ENCODE measurements at regions of chr16 and their contacts with region 1.

Region 1: GRCh38 chr16:21656795-21657768 is 4.7 kb upstream of the IGSF6 start:
- DNase-seq: peak; percentile 57
- CTCF ChIP-seq: peak; percentile 74

Region 2: DNA sequence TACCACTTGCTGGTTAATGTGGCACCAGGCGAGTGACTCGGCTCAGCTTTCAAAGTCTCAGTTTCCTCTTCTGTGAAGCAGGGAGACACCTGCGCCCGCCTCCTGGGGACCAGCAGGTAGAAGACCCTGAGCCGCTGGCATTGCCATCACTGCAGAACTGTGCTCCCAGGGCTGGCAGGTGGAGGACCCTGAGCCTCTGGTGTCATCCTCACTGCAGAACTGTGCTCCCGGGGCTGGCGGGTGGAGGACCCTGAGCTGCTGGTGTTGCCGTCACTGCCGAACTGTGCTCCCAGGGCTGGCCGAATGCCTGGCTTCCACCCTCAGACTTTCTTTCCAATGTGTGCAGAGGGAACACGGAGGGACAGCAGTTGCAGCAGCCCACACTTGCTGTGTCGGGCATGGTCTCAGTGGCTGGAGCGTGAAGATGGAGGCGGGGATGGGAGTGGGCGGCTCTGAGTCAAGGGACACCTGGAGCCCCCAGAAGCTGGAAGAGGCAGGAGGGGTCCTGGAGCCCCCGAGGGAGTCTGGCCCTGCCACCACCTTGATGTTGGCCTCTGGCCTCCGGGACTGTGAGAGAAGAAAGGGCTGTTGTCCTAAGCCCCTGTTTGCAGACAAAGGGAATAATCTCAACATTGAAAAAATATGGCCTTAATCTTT is 133.5 kb before region 1 on chr16:
- CTCF ChIA-PET with region 1: no interaction called
- POLR2A ChIA-PET with region 1: no interaction called
- DNase-seq: no peak
- CTCF ChIP-seq: no peak

Region 3: DNA sequence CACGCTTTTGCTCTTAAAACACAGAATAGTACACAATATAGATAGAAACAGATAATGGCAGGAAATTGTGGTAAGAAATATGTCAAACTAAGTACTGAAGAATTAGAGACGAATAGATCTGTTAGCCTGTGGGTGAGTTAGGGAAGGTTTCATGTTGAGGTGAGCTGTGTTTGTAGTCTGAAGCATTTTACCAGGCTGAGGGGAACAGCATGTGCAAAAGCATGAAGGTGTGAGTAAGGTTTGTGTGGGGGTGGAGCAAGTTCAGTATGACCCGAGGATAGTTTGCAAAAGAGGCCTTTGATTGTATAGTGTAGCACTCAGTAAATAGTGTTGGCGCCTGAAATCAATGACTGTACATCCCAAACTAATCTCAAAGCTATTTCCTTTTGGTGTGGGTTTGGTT is 18.5 kb before region 1 on chr16:
- CTCF ChIA-PET with region 1: interaction called, 69 read pairs
- POLR2A ChIA-PET with region 1: no interaction called
- DNase-seq: no peak
- CTCF ChIP-seq: no peak

Region 4: DNA sequence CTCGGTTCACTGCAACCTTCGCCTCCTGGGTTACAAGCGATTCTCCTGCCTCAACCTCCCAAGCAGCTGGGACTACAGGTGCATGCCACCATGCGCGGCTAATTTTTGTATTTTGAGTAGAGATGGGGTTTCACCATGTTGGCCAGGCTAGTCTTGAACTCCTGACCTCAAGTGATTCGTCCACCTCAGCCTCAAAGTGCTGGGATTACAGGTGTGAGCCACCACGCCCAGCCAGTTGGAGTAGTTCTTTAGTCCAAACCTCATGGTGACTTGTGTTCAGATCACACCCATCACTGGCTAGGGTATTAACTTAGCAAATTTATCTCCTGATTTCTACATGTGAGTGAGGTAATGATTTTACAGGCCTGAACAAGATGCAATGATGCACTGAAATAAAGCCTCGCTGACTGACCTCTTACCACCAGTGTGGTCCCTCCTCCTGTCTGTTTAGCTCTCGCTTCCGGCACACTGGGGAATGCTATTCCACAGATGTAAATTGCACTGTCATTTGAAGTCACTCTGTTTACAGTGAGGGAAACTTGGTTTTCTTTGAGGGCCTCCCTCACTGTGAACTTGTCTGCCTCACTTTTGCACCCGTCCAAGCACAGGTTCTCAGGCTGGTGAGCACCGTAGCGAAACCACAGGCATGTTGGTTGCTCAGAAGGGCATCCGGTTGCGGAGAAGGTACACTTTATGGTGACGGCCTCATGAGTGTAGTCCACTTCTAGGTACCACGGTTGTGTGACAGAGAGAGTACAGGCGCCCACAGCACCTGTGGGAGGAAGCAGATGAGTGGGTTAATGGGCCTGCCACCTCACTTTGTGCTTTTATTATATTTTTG is 10.1 kb before region 1 on chr16:
- CTCF ChIA-PET with region 1: interaction called, 69 read pairs
- POLR2A ChIA-PET with region 1: no interaction called
- DNase-seq: peak; percentile 71
- CTCF ChIP-seq: no peak

Region 5: GRCh38 chr16:21698169-21699032 is 41.3 kb after region 1 on chr16:
- CTCF ChIA-PET with region 1: interaction called, 12 read pairs
- POLR2A ChIA-PET with region 1: no interaction called
- DNase-seq: no peak
- CTCF ChIP-seq: no peak

Region 6: DNA sequence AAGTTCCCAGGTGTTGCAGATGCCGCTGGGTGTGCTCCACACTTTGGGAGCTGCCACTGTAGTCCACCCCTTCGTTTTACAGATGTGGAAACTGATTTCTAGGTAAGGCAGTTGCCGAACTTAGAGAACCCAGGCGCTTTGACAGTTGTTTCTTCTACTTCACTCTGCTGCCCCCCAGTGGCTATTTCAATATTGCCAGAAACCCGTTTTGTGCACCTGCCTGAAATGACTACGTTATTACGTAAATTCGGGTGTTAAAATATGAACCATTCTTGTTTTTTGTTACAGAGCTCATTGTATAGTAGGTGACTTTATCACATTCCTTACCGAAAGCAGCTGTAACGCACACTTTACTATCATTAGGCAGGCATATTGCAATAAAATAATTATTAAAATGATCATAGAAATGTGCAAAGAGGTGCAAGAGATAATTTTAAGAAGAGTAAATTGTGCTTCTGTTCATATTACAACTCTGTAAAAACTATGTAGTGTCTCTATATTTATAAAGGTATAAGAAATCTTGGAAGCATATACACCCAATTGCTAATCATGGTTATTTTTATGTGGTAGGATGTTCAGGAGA is 51.5 kb after region 1 on chr16:
- CTCF ChIA-PET with region 1: interaction called, 40 read pairs
- POLR2A ChIA-PET with region 1: no interaction called
- DNase-seq: peak; percentile 78
- CTCF ChIP-seq: peak; percentile 69

Region 7: DNA sequence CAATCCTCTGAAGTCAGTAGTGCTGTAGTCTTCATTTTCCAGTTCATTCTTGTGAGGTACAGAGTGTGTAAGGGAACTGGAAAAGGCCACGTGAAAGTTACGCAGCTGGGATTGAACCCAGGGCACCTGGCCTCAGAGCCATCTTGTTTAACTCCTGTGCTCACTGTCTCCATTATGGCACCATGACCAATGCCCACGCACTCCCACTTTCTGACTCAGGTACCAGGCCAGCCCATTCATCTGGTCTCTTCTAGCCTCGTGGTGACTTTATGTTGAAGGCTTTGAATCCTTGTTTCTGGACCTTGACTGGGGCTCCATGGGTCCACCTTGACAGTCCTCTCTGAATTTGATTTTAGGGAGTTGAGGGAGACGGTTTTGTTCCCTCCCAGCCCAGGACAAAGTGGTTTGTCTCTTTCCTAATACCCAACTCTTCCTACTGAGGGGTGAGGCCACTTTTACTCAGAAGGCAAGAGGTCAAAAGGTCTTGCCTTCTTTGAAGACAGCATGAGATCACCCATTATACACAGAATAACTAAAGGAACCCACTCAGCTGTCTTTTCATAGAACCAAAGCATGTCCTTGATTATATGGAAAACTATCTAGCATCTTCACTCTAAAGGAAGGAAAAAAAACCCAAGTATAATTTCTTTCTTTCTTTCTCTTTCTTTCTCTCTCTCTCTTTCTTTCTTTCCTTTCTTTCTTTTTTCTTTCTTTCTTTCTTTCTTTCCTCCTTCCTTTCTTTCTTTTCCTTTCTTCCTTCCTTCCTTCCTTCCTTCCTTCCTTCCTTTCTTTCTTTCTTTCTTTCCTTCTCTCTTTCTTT is 56.7 kb after region 1 on chr16:
- CTCF ChIA-PET with region 1: interaction called, 40 read pairs
- POLR2A ChIA-PET with region 1: no interaction called
- DNase-seq: no peak
- CTCF ChIP-seq: no peak

Region 8: DNA sequence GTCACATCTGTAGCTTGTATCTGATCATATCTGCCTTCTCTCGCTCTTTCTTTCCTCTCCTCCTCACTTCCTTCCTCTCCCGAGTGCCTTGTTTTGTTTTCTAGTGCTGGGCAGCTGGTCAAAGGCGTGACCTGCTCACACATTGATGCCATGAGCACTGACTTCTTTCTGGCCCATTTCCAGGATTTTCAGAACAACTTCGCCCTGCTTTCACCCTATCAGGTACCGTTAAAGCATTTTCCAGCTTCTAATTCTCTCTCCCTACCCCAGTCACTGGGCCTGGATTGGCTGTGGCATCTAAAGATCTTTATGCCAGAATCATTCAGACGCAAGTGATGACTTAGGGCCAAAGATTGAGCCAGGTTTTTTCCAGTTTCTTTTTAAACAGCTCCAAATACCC is 62.2 kb after region 1 on chr16:
- CTCF ChIA-PET with region 1: interaction called, 14 read pairs
- POLR2A ChIA-PET with region 1: no interaction called
- DNase-seq: no peak
- CTCF ChIP-seq: no peak

Measured in GM10248 (cell line).